ENCODE measurements at regions of chr14 and their contacts with region 1.

Region 1: DNA sequence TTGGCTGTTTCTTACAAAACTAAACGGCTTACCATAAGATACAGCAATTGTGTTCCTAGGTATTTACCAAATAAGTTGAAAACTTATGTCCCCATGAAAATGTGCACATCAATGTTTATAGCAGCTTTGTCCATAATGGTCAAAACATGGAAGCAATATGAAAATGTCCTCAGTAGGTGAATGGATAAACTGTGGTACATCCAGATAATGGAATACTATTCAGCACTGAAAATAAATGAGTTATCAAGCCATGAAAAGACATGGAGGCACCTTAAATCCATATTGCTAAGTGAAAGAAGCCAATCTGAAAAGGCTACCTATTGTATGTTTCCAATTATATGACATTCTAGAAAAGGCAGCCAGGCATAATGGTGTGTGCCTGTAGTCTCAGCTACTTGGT is 40.7 kb downstream of the CFL2 start:
- DNase-seq: no peak
- ATAC-seq: no peak

Region 2: GRCh38 chr14:34722717-34723545 is 49.2 kb after region 1 on chr14:
- intact Hi-C with region 1: loop called (anchors 1 kb)
- DNase-seq: no peak
- ATAC-seq: peak; percentile 48

Region 3: GRCh38 chr14:34733235-34733634 is 59.5 kb after region 1 on chr14:
- intact Hi-C with region 1: no loop called
- DNase-seq: no peak
- ATAC-seq: no peak

Measured in Right ventricle myocardium inferior (tissue), 1 donor.